MCF 10A (cell line): ENCODE measurements at regions of chr22 and their contacts with region 1.

Region 1: DNA sequence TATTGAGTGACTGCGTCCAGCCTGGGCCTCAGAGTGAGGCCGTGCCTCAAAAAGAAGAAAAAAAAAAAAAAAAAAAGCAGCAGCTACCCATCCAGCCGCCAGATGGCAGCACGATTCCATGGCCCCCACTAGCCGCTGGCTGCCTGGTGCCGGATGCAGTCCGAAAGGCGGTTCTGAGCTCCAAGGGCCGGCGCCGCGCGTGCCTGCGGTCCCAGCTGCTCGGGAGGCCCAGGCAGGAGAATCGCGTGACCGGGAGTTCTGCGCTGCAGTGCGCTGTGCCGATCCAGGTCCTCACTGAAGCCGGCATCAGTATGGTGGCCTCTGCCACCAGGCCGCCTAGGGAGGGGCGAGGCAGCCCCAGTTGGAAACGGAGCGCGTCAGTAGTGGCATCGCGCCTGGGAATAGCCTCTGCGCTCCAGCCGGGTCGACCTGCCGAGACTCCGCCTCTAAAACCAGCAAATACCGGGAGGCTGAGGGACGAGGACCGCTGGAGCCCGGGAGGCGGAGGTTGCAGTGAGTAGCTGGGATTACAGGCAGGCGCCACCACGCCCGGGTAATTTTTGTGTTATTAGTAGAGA is 19.3 kb downstream of the SCARF2 start:
- DNase-seq: peak; percentile 68
- H3K4me3 Mint-ChIP-seq: no peak overlapping the region
- H3K27ac Mint-ChIP-seq: no peak overlapping the region
- H3K4me1 Mint-ChIP-seq: no peaks in the 10 kb centered on the region
- H3K27me3 Mint-ChIP-seq: no peaks in the 10 kb centered on the region
- CTCF ChIP-seq: peak; percentile 76

Region 2: DNA sequence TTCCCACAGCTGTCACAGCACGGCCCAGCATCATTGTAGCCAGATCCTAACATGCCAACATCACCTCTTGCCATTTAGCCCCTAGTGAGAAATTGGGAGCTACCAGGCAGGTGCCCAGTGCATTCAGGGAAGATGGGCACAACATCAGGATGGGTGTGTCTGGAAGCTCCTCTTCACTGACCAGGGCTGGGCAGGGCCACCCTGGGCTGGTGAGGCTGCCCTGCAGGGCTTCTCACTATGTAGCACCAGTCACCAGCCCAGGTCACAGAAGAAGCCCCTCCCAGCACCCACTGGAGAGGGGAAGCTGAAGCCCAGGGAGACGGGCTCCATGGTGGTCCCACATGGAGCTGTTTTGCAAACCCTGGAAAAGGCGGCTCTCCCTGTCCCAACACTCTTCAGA is 10.5 kb before region 1 on chr22:
- CTCF ChIA-PET with region 1: interaction called, 11 read pairs
- POLR2A ChIA-PET with region 1: no interaction called
- intact Hi-C with region 1: no loop called
- DNase-seq: no peak
- H3K4me3 Mint-ChIP-seq: no peak overlapping the region
- H3K27ac Mint-ChIP-seq: no peak overlapping the region
- H3K4me1 Mint-ChIP-seq: no peaks in the 10 kb centered on the region
- H3K27me3 Mint-ChIP-seq: no peaks in the 10 kb centered on the region
- CTCF ChIP-seq: no peak

Region 3: DNA sequence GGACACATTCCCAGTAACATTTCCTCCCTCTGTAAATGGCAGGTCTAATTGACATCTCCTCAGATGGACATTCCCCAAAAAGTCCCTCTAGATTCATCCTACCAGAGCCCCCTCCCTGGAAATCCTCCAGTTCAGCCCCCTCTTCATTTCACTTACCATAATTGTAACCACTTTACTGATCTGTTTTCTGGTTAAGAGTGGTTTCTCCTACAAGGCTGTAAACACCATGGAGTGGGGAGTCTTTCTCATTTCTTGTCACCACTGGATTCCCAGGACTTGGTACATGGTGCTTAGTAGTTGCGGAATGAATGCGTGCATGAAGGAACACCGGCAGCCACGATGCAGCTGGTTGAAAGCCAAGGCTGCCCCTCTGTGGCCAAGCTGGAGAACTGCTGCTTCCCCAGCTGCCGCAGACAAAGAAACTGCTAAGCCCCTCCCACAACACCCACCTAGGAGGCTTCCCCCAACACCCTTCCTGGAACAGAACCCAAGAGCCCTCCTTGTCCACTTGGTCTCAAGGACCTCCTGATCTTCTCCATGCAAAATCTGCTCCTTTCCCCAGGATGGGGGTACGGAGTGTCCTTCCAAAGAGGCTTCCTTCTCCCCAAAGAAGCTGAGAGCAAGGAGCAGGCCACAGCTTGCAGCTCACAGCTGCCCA is 37.9 kb after region 1 on chr22:
- CTCF ChIA-PET with region 1: interaction called, 25 read pairs
- POLR2A ChIA-PET with region 1: interaction called, 3 read pairs
- intact Hi-C with region 1: loop called (anchors 1 kb)
- DNase-seq: peak; percentile 63
- H3K4me3 Mint-ChIP-seq: no peak overlapping the region
- H3K27ac Mint-ChIP-seq: no peak overlapping the region
- H3K4me1 Mint-ChIP-seq: no peaks in the 10 kb centered on the region
- H3K27me3 Mint-ChIP-seq: no peaks in the 10 kb centered on the region
- CTCF ChIP-seq: peak; percentile 55

Region 4: GRCh38 chr22:20495861-20496681 is 77.8 kb after region 1 on chr22:
- CTCF ChIA-PET with region 1: interaction called, 12 read pairs
- POLR2A ChIA-PET with region 1: no interaction called
- intact Hi-C with region 1: loop called (anchors 1 kb)
- DNase-seq: peak; percentile 88
- H3K4me3 Mint-ChIP-seq: peak overlapping the region; percentile 97
- H3K27ac Mint-ChIP-seq: peak overlapping the region; percentile 91
- H3K4me1 Mint-ChIP-seq: peaks cover 18% of the 10 kb centered on the region
- H3K27me3 Mint-ChIP-seq: no peaks in the 10 kb centered on the region
- CTCF ChIP-seq: peak; percentile 83